ENCODE measurements at regions of chr2 and their contacts with region 1.

Region 1: GRCh38 chr2:96951093-96951654 is 35.2 kb downstream of the FAM178B start:
- DNase-seq: peak; percentile 66
- H3K4me3 Mint-ChIP-seq: no peak overlapping the region
- H3K27ac Mint-ChIP-seq: no peak overlapping the region
- H3K4me1 Mint-ChIP-seq: no peaks in the 10 kb centered on the region
- H3K27me3 Mint-ChIP-seq: no peaks in the 10 kb centered on the region
- CTCF ChIP-seq: peak; percentile 90

Region 2: GRCh38 chr2:96842600-96842999 is 108.6 kb before region 1 on chr2:
- CTCF ChIA-PET with region 1: interaction called, 11 read pairs
- POLR2A ChIA-PET with region 1: no interaction called
- intact Hi-C with region 1: no loop called
- DNase-seq: no peak
- H3K4me3 Mint-ChIP-seq: no peak overlapping the region
- H3K27ac Mint-ChIP-seq: no peak overlapping the region
- H3K4me1 Mint-ChIP-seq: no peaks in the 10 kb centered on the region
- H3K27me3 Mint-ChIP-seq: no peaks in the 10 kb centered on the region
- CTCF ChIP-seq: no peak

Region 3: GRCh38 chr2:96868555-96869280 is 82.5 kb before region 1 on chr2:
- CTCF ChIA-PET with region 1: interaction called, 11 read pairs
- POLR2A ChIA-PET with region 1: interaction called, 8 read pairs
- intact Hi-C with region 1: no loop called
- DNase-seq: peak; percentile 87
- H3K4me3 Mint-ChIP-seq: peak overlapping the region; percentile 78
- H3K27ac Mint-ChIP-seq: peak overlapping the region; percentile 63
- H3K4me1 Mint-ChIP-seq: peaks cover 5% of the 10 kb centered on the region
- H3K27me3 Mint-ChIP-seq: no peaks in the 10 kb centered on the region
- CTCF ChIP-seq: peak; percentile 82

Region 4: DNA sequence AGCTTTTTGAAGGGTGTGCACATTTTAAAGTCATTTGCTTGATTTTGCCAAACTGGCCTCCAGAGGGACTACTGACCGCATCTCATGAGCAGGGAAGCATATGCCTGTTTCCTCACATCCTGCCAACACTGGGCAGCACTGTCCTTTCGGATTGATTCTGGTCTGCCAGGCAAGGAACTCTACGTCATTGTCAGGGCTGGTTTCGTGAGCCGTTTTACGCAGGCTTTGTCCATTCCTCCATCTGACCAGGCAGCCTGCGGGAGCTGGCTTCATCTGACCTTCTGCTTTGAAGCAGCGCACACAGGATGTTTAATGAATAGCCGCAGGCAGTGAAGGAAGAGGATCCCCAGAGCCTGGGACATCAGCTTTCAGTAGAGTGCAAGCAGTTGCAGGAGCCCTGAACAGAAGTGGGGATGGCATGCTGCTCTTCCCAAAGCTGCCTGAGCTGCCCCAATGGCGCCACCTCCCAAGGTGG is 35.0 kb before region 1 on chr2:
- CTCF ChIA-PET with region 1: interaction called, 12 read pairs
- POLR2A ChIA-PET with region 1: no interaction called
- intact Hi-C with region 1: no loop called
- DNase-seq: peak; percentile 51
- H3K4me3 Mint-ChIP-seq: peak overlapping the region; percentile 63
- H3K27ac Mint-ChIP-seq: no peak overlapping the region
- H3K4me1 Mint-ChIP-seq: peaks cover 34% of the 10 kb centered on the region
- H3K27me3 Mint-ChIP-seq: peaks cover 18% of the 10 kb centered on the region
- CTCF ChIP-seq: no peak

Region 5: GRCh38 chr2:96940001-96940615 is 11.1 kb before region 1 on chr2:
- CTCF ChIA-PET with region 1: interaction called, 55 read pairs
- POLR2A ChIA-PET with region 1: no interaction called
- intact Hi-C with region 1: no loop called
- DNase-seq: no peak
- H3K4me3 Mint-ChIP-seq: no peak overlapping the region
- H3K27ac Mint-ChIP-seq: no peak overlapping the region
- H3K4me1 Mint-ChIP-seq: no peaks in the 10 kb centered on the region
- H3K27me3 Mint-ChIP-seq: peaks cover 13% of the 10 kb centered on the region
- CTCF ChIP-seq: no peak

Measured in MCF 10A (cell line).